ENCODE measurements at regions of chrX and their contacts with region 1.

Region 1: GRCh38 chrX:65667503-65668376 is at the start of gene MSN:
- DNase-seq: peak; percentile 63
- ATAC-seq: peak; percentile 79
- H3K4me3 Mint-ChIP-seq: peak within 1 kb of the TSS; percentile 93
- H3K27ac Mint-ChIP-seq: peak within 1 kb of the TSS; percentile 89
- H3K4me1 Mint-ChIP-seq: peaks cover 46% of the 10 kb centered on the region
- H3K27me3 Mint-ChIP-seq: no peaks in the 10 kb centered on the region
- CTCF ChIP-seq: no peak
- total RNA-seq, gene MSN: 352 TPM in 2 replicates

Region 2: DNA sequence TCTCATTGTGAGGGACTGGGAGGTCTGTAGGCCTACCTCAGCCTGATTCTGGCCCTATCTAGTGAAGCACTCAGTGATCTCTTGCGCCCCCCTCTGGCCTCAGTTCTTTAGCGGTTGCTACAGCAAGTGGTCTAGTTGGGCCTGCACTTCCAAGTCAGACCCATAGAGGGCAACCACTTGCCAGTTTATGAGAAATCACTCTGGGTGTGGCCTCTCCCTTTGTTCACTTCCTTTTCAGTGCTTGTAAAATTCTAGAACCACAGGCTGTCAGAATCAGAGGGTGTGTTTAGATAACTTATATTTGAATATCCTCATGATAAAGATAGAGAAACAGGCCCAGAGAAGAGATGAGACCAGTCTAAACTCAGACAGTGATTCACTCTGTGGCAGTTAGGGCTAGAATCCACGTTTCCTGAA is 72.3 kb before region 1 on chrX:
- CTCF ChIA-PET with region 1: no interaction called
- POLR2A ChIA-PET with region 1: interaction called, 26 read pairs
- intact Hi-C with region 1: loop called (anchors 1 kb)
- DNase-seq: peak; percentile 71
- ATAC-seq: peak; percentile 91
- H3K4me3 Mint-ChIP-seq: peak overlapping the region; percentile 76
- H3K27ac Mint-ChIP-seq: peak overlapping the region; percentile 94
- H3K4me1 Mint-ChIP-seq: peaks cover 44% of the 10 kb centered on the region
- H3K27me3 Mint-ChIP-seq: no peaks in the 10 kb centered on the region
- CTCF ChIP-seq: no peak

Region 3: GRCh38 chrX:65688403-65688871 is 20.7 kb after region 1 on chrX:
- CTCF ChIA-PET with region 1: no interaction called
- POLR2A ChIA-PET with region 1: interaction called, 7 read pairs
- intact Hi-C with region 1: loop called (anchors 2 kb)
- DNase-seq: no peak
- ATAC-seq: peak; percentile 53
- H3K4me3 Mint-ChIP-seq: peak overlapping the region; percentile 55
- H3K27ac Mint-ChIP-seq: peak overlapping the region; percentile 85
- H3K4me1 Mint-ChIP-seq: peaks cover 94% of the 10 kb centered on the region
- H3K27me3 Mint-ChIP-seq: no peaks in the 10 kb centered on the region
- CTCF ChIP-seq: no peak

Region 4: DNA sequence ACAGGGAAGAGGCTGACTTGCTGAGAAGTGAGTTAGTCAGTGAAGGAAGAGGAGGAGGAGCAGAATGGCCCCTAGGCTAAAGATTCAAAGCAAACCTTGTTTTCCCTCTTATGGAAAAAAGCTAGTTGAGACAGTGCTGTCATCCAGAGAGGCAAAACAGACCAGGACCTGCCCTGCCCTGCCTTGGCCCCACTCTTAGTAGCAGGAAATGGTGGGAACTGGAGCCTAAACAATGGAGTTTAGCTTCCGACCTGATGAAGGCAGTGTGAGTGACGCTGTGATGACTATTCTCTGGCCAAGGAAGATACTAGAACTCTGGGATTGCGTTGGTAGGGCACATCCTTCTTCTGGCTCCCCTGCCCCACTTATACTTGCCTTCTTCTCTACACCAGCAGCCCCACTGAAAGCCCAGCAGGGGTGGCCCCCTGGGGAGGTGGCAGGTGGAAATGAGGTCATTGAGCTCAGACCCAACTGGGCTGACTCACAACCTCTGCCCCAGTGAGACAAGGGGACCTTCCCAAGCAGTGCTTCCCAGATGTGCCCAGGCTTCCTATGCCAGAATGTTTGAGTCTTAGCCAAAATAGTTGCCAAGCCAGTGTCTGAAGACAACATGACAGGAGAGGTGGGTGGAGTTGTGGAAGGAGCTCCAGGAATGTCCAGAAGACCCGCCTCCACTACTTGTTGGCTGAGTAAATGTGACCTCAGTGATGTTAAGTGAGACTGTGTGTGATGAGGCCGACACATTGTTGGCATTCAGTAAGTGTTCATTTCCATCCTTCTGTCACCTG is 38.5 kb after region 1 on chrX:
- CTCF ChIA-PET with region 1: interaction called, 3 read pairs
- POLR2A ChIA-PET with region 1: interaction called, 10 read pairs
- intact Hi-C with region 1: no loop called
- DNase-seq: peak; percentile 34
- ATAC-seq: peak; percentile 92
- H3K4me3 Mint-ChIP-seq: peak overlapping the region; percentile 50
- H3K27ac Mint-ChIP-seq: peak overlapping the region; percentile 89
- H3K4me1 Mint-ChIP-seq: peaks cover 69% of the 10 kb centered on the region
- H3K27me3 Mint-ChIP-seq: no peaks in the 10 kb centered on the region
- CTCF ChIP-seq: no peak

Region 5: DNA sequence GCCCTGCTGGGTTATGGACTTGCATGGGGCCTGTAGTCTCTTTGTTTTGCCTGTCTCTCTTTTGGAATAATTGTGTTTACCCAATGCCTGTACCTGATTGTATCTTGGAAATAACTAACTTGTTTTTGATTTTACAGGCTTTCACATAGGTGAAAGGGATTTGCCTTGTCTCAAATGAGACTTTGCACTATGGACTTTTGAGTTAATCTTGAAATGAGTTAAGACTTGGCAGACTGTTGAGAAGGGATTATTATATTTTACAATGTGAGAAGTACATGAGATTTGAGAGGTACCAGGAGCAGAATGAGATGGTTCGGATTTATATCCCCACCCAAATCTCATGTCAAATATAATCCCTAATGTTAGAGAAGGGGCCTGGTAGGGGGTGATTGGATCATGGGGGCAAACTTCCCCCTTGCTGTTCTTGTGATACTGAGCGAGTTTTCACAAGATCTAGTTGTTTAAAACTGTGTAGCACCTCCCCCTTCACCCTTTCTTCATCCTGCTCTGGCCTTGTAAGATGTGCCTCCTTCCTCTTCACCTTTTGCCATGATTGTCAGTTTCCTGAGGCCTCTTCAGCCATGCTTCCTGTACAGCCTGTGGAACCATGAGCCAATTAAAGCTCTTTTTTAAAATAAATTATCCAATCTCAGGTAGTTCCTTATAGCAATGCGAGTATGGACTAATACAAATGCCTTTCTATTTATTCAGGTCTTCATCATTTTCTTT is 102.0 kb after region 1 on chrX:
- CTCF ChIA-PET with region 1: no interaction called
- POLR2A ChIA-PET with region 1: no interaction called
- intact Hi-C with region 1: no loop called
- DNase-seq: no peak
- ATAC-seq: no peak
- H3K4me3 Mint-ChIP-seq: no peak overlapping the region
- H3K27ac Mint-ChIP-seq: no peak overlapping the region
- H3K4me1 Mint-ChIP-seq: peaks cover 19% of the 10 kb centered on the region
- H3K27me3 Mint-ChIP-seq: no peaks in the 10 kb centered on the region
- CTCF ChIP-seq: no peak

Region 6: DNA sequence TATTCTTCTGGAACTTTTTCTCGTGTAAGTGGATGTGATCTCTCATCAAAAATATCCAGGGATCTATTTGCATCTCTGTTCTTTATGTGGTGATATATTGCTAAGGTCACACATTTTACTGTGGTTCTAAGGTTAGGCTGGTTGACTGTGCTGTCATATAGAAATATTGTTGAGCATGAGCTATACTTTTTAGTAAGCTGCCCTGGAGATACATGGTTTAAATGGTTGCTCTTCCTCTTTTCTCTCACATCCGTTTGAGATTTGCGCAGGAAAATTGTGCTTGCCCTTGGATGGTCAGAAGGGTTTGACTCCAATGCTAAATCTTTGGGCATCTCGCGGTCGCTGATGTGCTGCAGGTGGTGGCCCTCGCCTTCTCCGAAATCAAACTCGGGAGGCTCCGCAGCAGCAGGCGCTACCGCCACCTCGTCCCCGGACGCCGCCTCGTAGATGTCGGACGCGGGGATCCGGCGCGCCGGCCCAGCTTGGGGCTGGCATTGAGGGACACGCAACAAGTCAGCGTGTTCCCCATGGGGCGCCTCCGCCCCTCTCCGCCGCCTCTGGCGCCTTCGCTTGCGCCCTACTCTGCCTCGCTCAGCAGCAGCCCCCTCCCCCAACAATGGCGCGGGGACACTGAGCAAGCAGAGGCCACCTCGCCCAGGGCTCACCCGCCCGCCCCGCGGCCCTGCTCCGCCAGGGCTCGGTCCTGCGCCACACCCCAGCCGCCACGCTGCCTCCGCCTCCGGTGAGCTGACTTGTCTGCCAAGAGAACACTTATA is 154.2 kb after region 1 on chrX:
- CTCF ChIA-PET with region 1: no interaction called
- POLR2A ChIA-PET with region 1: no interaction called
- intact Hi-C with region 1: loop called (anchors 5 kb)
- DNase-seq: peak; percentile 35
- ATAC-seq: peak; percentile 79
- H3K4me3 Mint-ChIP-seq: peak overlapping the region; percentile 78
- H3K27ac Mint-ChIP-seq: peak overlapping the region; percentile 72
- H3K4me1 Mint-ChIP-seq: peaks cover 16% of the 10 kb centered on the region
- H3K27me3 Mint-ChIP-seq: no peaks in the 10 kb centered on the region
- CTCF ChIP-seq: no peak

Region 7: DNA sequence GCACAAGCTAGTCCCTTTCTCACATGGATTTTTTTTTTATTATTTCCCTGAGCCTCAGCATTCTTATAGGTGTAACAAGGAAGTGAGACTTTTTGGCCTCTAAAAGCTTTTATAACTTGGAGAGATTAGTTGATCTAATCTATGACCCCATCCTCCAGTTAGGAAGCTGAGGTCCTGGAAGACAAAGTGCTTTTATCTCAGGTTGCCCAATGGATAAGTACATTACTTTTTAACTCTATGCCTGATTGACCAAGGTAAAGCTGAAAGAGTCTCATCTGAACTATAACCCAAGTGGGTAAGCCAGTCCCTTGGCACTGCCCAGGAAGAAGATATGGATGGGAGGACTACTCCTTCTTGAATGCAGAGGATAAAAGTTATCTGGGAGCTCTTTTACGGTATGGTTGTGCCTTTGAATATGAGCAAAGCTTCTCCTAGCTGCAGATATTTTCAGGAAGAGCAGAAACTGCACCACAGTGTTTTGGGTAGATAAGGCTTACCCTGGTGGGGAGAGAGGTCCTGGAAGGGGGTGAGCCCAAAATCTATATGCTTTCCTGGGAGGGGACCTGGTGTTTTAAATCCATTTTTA is 331.9 kb after region 1 on chrX:
- CTCF ChIA-PET with region 1: no interaction called
- POLR2A ChIA-PET with region 1: interaction called, 11 read pairs
- intact Hi-C with region 1: no loop called
- DNase-seq: no peak
- ATAC-seq: no peak
- H3K4me3 Mint-ChIP-seq: no peak overlapping the region
- H3K27ac Mint-ChIP-seq: peak overlapping the region; percentile 41
- H3K4me1 Mint-ChIP-seq: peaks cover 67% of the 10 kb centered on the region
- H3K27me3 Mint-ChIP-seq: no peaks in the 10 kb centered on the region
- CTCF ChIP-seq: no peak